Right ventricle myocardium superior (tissue), 1 donor: ENCODE measurements at regions of chr2 and their contacts with region 1.

Region 1: GRCh38 chr2:108988796-108989713 is at the start of gene EDAR:
- DNase-seq: no peak
- ATAC-seq: peak; percentile 96
- total RNA-seq, gene EDAR: 0.11 TPM

Region 2: DNA sequence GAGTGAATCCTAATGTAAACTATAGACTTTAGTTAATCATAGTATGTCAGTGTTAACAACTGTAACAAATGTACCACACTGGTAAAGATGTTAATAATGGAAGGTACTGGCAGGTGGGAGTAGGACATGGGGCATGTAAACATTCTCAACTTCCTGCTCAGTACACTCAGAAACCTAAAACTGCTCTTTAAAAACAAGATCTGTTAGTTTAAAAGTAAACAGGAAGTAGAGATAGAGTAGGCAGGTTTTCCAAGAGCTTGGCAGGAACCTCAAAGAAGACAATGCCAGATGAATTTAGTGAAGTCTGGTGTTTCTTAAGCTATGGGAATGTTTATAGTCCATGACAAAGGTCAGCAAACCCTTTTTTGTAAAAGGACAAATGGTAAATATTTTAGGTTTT is 155.8 kb before region 1 on chr2:
- intact Hi-C with region 1: no loop called
- DNase-seq: no peak
- ATAC-seq: no peak

Region 3: DNA sequence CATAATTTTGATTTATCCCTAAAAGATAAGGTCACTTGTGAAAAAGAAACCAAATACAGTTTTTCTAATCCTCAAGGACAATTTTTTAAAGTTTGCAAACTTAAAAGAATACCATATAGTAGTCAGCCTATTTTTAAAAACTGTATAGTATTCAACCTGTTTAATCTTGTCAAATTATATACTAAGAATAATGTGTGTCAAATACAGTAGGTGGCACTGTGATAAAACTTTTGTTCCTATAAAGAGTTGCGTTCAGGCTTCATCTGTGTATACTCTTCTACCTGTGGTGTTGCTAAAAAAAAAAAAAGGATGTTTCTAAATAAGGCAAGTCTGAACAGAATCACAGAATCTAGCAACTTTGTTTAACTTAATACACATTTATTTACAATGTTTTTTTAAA is 133.9 kb before region 1 on chr2:
- intact Hi-C with region 1: loop called (anchors 5 kb)
- DNase-seq: no peak
- ATAC-seq: peak; percentile 62

Region 4: DNA sequence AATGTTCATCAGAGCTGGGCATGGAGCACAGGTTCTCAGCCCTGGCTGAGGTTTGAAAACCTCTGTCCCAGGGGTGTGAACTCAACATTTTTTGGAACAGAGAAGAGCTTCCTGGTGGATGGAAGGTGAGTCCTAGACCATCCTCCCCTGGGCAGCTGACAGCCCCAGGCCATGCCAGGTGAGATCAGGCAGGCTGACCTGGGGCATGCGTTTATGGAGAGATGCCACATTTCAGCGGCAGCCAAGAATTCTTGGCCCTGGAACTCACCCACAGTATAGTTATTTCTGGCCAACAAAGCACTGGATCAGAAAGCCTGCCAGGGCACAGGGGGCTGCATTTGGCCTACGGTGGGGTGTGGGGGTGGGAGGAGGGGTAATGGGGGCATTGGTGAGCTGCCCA is 83.9 kb before region 1 on chr2:
- intact Hi-C with region 1: no loop called
- DNase-seq: peak; percentile 60
- ATAC-seq: peak; percentile 93

Region 5: GRCh38 chr2:108927936-108928659 is 61.0 kb before region 1 on chr2:
- intact Hi-C with region 1: loop called (anchors 2 kb)
- DNase-seq: no peak
- ATAC-seq: peak; percentile 65

Region 6: DNA sequence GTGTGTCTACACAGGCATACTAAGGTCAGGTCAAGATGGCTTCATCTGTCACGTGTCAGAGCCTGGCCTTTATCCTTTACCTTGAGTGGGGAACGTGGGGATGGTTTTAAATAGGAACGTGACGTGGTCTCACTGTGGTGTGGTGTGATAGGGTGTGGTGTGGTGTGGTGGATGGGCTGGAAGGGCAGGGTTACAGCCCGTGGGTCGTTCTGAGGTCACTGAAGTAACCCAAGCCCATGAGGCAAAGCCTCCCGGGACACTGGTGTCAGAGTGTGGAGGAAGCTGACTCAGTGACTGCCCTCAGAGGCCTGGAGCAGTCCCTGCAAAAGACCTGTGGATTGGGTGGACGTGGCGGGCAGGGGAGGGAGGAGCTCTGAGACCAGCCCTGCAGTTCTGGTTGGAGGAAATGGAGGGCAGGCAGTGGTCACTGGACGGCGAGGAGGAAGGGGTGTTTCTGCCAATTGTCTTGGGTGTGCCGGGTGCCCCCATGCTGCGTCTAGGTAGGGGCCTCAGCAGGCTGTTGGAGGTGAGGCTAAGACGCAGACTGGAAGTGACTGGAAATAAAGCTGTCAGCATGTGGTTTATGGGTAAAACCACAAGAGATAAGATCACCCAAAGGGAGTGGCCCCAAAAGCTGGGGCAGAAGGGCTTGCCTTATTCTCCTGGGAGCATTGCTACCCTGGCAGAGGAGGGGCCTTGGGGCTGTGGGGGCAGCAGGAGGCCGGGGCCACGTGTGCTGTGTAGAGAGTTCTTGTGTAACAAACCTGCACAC is 224.8 kb after region 1 on chr2:
- intact Hi-C with region 1: no loop called
- DNase-seq: no peak
- ATAC-seq: peak; percentile 27